ENCODE measurements at regions of chr2 and their contacts with region 1.

Region 1: DNA sequence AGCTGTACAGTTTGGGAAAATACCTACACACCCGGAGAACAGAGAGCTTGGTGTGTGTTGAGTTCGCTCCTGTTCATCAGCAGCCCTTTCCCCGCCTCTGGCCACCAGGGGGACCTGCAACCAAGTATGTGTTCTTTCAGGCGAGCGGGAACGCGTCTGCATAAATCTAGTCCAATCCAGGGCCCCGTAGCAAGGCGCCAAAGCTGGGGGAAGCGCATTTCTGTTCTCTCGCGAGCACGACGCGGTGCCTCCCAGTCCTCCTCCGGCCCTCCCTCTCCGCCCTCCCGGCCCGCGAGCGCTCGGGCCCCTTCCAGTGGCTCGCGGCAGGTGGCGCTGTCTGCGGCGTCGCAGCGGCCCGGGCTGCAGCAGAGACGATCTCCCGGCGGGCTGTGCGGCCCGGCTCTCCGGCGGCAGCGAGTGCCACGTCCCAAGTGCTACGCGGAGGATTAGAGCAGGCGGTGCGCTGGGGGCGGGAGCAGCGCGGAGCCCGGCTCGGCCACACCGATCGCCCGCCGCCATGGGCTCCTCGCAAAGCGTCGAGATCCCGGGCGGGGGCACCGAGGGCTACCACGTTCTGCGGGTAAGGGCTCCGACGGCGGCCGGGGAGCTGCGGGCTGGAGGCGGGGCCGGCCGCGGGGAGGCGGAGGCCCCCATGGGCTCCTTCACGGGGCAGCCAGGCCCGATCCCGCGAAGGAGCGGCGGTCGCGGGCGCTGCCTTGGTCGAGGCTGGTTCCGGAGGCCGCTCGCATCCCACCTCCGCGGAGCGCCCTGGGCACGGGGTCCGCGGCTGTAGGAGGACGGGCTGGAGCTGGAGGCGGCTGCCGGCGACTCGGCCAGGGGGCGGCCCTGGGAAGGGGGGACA is at the start of gene GORASP2:
- DNase-seq: peak; percentile 94 to 100 (median 97)

Region 2: GRCh38 chr2:171416009-171416926 is 487.2 kb after region 1 on chr2:
- intact Hi-C with region 1: loop called (anchors 2 kb)
- DNase-seq: peak; percentile 75 to 98 (median 90)

Measured in posterior cingulate gyrus (tissue), 11 donors.